ENCODE measurements at regions of chr13 and their contacts with region 1.

Region 1: GRCh38 chr13:26062844-26063444 is 11.1 kb upstream of the SHISA2 start:
- DNase-seq: peak; percentile 15
- H3K4me3 ChIP-seq: no peak overlapping the region
- H3K27ac ChIP-seq: no peak overlapping the region
- H3K4me1 ChIP-seq: no peaks in the 10 kb centered on the region
- H3K27me3 ChIP-seq: no peaks in the 10 kb centered on the region
- CTCF ChIP-seq: peak; percentile 51 to 57 (median 55)
- EP300 ChIP-seq: no peak
- POLR2A ChIP-seq: no peak

Region 2: GRCh38 chr13:25574437-25575411 is 488.2 kb before region 1 on chr13:
- in situ Hi-C with region 1: loop called (anchors 5 to 10 kb)
- intact Hi-C with region 1: no loop called
- DNase-seq: peak; percentile 79
- H3K4me3 ChIP-seq: no peak overlapping the region
- H3K27ac ChIP-seq: no peak overlapping the region
- H3K4me1 ChIP-seq: no peaks in the 10 kb centered on the region
- H3K27me3 ChIP-seq: no peaks in the 10 kb centered on the region
- CTCF ChIP-seq: peak; percentile 68 to 75 (median 74)
- EP300 ChIP-seq: no peak
- POLR2A ChIP-seq: no peak

Region 3: GRCh38 chr13:25585000-25585399 is 477.9 kb before region 1 on chr13:
- in situ Hi-C with region 1: no loop called
- intact Hi-C with region 1: loop called (anchors 5 kb)
- DNase-seq: no peak
- H3K4me3 ChIP-seq: no peak overlapping the region
- H3K27ac ChIP-seq: no peak overlapping the region
- H3K4me1 ChIP-seq: no peaks in the 10 kb centered on the region
- H3K27me3 ChIP-seq: no peaks in the 10 kb centered on the region
- CTCF ChIP-seq: no peak
- EP300 ChIP-seq: no peak
- POLR2A ChIP-seq: no peak

Region 4: GRCh38 chr13:25836574-25837336 is 226.2 kb before region 1 on chr13:
- in situ Hi-C with region 1: loop called in 1 of 4 experiments (anchors 10 kb)
- intact Hi-C with region 1: no loop called
- DNase-seq: no peak
- H3K4me3 ChIP-seq: no peak overlapping the region
- H3K27ac ChIP-seq: no peak overlapping the region
- H3K4me1 ChIP-seq: no peaks in the 10 kb centered on the region
- H3K27me3 ChIP-seq: no peaks in the 10 kb centered on the region
- CTCF ChIP-seq: no peak
- EP300 ChIP-seq: no peak
- POLR2A ChIP-seq: no peak

Region 5: GRCh38 chr13:25980255-25980654 is 82.7 kb before region 1 on chr13:
- in situ Hi-C with region 1: no loop called
- intact Hi-C with region 1: no loop called
- DNase-seq: no peak
- H3K4me3 ChIP-seq: no peak overlapping the region
- H3K27ac ChIP-seq: no peak overlapping the region
- H3K4me1 ChIP-seq: no peaks in the 10 kb centered on the region
- H3K27me3 ChIP-seq: no peaks in the 10 kb centered on the region
- CTCF ChIP-seq: no peak
- EP300 ChIP-seq: no peak
- POLR2A ChIP-seq: no peak

Region 6: DNA sequence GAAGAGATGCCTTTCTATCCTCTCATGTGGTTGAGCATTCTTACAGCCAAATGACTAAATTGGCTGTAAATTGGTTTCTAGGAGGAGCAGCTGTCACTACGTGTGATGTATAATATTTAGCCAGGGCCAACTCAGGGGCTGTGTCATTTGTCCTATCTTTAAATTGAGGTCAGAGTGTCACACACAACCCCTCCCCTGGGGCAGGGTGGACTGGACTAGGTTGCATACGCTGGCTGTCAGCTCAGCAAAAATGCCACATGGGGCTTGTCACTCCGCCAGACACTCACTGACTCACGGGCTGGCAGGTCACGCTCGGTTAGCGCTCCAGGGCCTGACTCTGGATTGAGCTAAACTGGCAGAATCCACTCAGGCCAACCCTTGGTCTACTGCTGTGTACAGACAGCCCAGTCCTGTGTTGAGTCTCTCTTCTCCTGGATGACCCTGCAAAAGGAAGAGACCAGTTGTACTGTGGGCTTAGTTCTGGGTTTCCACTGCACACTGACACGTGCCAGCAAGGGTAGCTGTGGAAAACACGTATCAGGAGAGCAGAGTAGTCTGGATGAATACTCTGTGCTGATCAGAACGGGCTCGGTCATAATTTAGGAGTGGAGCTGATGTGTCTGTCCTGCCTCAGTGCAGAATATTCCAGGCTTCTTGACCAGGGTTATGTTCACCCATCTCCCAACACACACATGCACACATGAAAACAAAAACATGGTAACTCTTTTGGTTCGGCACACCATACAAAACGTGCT is 40.2 kb before region 1 on chr13:
- in situ Hi-C with region 1: no loop called
- intact Hi-C with region 1: no loop called
- DNase-seq: no peak
- H3K4me3 ChIP-seq: no peak overlapping the region
- H3K27ac ChIP-seq: no peak overlapping the region
- H3K4me1 ChIP-seq: no peaks in the 10 kb centered on the region
- H3K27me3 ChIP-seq: no peaks in the 10 kb centered on the region
- CTCF ChIP-seq: no peak
- EP300 ChIP-seq: no peak
- POLR2A ChIP-seq: no peak

Measured in transverse colon (tissue), 4 donors.